ENCODE measurements at regions of chr1 and their contacts with region 1.

Region 1: GRCh38 chr1:26500488-26501175 is 28.4 kb downstream of the HMGN2 start:
- DNase-seq: peak; percentile 55
- ATAC-seq: peak; percentile 89
- H3K4me3 ChIP-seq: peak overlapping the region; percentile 60
- H3K27ac ChIP-seq: peak overlapping the region; percentile 81
- H3K4me1 ChIP-seq: peaks cover 5% of the 10 kb centered on the region
- H3K27me3 ChIP-seq: no peaks in the 10 kb centered on the region
- CTCF ChIP-seq: no peak
- POLR2A ChIP-seq: no peak
- RAD21 ChIP-seq: no peak

Region 2: DNA sequence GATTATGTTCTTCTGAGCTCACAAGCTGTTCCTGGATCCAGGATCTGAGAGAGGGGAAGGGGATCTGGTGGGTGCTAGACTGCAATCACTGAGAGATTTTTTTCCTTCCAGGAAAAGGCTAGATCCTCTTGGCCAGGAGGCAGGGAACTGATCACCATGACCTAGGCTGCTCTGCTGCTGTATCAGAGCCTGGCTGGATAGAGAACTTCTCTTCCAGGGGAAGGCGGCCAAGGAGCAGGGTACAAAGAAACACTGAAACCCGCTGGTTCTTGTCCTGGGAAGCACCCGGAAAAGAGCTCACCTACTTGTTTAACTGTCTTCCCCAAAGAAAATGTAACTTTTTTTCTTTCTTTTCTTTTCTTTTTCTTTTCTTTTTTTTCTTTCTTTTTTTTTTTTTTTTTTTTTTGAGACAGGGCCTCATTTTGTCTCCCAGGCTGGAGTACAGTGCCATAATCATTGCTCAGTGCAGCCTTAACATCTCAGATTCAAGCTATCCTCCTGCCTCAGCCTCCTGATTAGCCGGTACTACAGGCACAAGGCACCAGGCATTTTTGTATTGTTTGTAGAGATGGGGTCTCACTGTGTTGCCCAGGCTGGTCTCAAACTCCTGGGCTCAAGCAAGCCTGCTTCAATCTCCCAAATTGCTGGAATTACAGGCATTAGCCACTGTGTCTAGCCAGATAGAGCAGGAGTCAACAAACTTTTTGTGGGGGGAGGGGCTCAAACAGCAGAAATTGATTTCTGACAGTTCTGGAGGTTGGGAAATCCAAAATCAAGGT is 16.5 kb after region 1 on chr1:
- CTCF ChIA-PET with region 1: interaction called, 10 read pairs
- POLR2A ChIA-PET with region 1: no interaction called
- dilution Hi-C with region 1: no loop called
- in situ Hi-C with region 1: no loop called
- intact Hi-C with region 1: no loop called
- DNase-seq: no peak
- ATAC-seq: no peak
- H3K4me3 ChIP-seq: no peak overlapping the region
- H3K27ac ChIP-seq: no peak overlapping the region
- H3K4me1 ChIP-seq: no peaks in the 10 kb centered on the region
- H3K27me3 ChIP-seq: peaks cover 30% of the 10 kb centered on the region
- CTCF ChIP-seq: no peak
- POLR2A ChIP-seq: no peak
- RAD21 ChIP-seq: no peak